ENCODE measurements at regions of chr11 and their contacts with region 1.

Region 1: GRCh38 chr11:14892036-14892567 is at the start of gene CYP2R1:
- DNase-seq: peak; percentile 88 to 98
- H3K4me3 ChIP-seq: peak within 1 kb of the TSS; percentile 82
- H3K27ac ChIP-seq: peak within 1 kb of the TSS; percentile 90 to 95
- H3K4me1 ChIP-seq: peaks cover 0 to 16% of the 10 kb centered on the region in 2 donors
- H3K27me3 ChIP-seq: no peaks in the 10 kb centered on the region
- CTCF ChIP-seq: peak in 1 of 3 experiments; percentile 3
- total RNA-seq, gene CYP2R1: 40.1 TPM

Region 2: GRCh38 chr11:13668102-13668956 is 1223.8 kb before region 1 on chr11 and contains the start of gene FAR1:
- intact Hi-C with region 1: loop called (anchors 10 kb)
- DNase-seq: peak; percentile 96 to 99
- H3K4me3 ChIP-seq: peak within 1 kb of the TSS; percentile 92 to 95
- H3K27ac ChIP-seq: peak within 1 kb of the TSS; percentile 79 to 84
- H3K4me1 ChIP-seq: peaks cover 0 to 3% of the 10 kb centered on the region in 2 donors
- H3K27me3 ChIP-seq: no peaks in the 10 kb centered on the region
- CTCF ChIP-seq: peak; percentile 61 to 64 (median 62)
- total RNA-seq, gene FAR1: 66.0 TPM

Region 3: DNA sequence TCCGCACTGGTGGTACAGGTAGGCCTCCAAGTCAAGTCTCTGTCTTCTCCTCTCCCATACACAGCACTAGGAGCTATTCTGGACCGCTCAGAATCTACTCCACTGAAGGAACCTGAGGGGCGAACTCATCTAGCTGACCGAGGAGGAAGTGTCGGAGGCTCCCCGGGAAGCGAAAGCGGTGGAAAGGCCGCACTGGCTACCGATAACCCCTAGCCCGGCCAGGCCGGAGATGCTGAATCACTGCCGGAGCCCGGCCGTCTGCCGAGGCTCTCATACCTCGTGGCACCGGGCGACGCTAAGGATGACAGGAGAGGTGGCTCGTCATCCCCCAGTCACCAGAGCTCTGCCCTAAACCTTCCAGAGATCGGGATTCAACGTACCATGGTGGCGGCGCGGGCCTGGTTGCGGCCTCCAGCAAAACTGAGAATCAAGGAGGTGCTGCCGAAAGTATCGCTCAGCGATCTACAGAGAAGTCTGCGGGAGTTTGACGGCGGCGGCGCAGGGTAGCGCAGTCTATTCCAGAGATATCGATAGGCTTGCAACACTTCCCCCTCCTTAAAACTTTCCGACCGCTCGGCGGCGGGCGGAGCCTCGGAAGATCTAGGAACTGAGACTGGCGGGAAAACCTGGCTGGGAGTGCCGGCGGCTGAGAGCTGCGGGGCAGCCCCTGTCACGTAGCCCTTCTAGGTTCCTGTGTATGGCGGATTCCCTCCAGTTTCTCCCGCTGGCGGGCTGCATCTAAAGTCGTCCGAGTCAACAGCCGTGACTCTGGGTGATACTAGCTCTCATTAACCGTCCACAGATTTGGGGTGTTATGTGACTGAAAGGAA is 372.0 kb before region 1 on chr11 and contains the start of gene PSMA1:
- intact Hi-C with region 1: loop called (anchors 1 kb)
- DNase-seq: peak; percentile 82 to 98
- H3K4me3 ChIP-seq: peak within 1 kb of the TSS; percentile 85 to 91
- H3K27ac ChIP-seq: peak within 1 kb of the TSS; percentile 86 to 89
- H3K4me1 ChIP-seq: peaks cover 6 to 17% of the 10 kb centered on the region in 2 donors
- H3K27me3 ChIP-seq: no peaks in the 10 kb centered on the region
- CTCF ChIP-seq: peak; percentile 22 to 62 (median 45)
- total RNA-seq, gene PSMA1: 42.5 TPM

Region 4: GRCh38 chr11:14544611-14545010 is 347.5 kb before region 1 on chr11:
- intact Hi-C with region 1: loop called (anchors 5 kb)
- DNase-seq: no peak
- H3K4me3 ChIP-seq: no peak overlapping the region
- H3K27ac ChIP-seq: peak overlapping the region in 1 of 2 donors; percentile 10
- H3K4me1 ChIP-seq: peaks cover 0 to 17% of the 10 kb centered on the region in 2 donors
- H3K27me3 ChIP-seq: no peaks in the 10 kb centered on the region
- CTCF ChIP-seq: no peak

Measured in ascending aorta (tissue), 2 donors.